ENCODE measurements at regions of chr12 and their contacts with region 1.

Region 1: DNA sequence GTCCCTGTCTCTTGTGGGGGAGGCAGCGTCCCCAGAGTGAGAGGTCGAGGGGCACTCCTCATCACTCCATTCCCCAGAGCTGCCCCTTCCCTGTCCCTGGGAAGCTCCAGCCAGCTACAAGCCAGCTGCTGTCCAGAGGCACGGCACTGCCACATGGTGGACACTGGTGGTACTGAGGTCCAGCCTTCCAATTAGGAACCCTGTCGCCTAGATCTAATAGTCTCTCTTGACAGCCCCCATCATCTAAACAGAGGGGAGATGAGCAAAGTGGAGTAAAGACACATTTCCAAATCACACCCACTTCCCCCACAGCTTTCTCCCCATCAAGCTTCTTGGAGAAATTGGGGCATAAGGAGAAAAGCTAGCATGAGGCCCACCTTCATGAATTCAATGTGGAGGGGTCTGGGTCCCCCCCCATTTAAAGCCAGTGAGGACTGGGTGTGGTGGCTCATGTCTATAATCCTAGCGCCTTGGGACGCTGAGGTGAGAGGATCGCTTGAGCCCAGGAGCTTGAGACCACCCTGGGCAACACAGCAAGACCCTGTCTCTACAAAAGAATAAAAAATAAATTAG is 2.1 kb upstream of the INHBE start:
- DNase-seq: peak; percentile 94
- ATAC-seq: peak; percentile 72
- H3K4me3 Mint-ChIP-seq: no peak overlapping the region
- H3K27ac Mint-ChIP-seq: no peak overlapping the region
- H3K4me1 Mint-ChIP-seq: peaks cover 43% of the 10 kb centered on the region
- H3K27me3 Mint-ChIP-seq: no peaks in the 10 kb centered on the region
- CTCF ChIP-seq: peak; percentile 76

Region 2: DNA sequence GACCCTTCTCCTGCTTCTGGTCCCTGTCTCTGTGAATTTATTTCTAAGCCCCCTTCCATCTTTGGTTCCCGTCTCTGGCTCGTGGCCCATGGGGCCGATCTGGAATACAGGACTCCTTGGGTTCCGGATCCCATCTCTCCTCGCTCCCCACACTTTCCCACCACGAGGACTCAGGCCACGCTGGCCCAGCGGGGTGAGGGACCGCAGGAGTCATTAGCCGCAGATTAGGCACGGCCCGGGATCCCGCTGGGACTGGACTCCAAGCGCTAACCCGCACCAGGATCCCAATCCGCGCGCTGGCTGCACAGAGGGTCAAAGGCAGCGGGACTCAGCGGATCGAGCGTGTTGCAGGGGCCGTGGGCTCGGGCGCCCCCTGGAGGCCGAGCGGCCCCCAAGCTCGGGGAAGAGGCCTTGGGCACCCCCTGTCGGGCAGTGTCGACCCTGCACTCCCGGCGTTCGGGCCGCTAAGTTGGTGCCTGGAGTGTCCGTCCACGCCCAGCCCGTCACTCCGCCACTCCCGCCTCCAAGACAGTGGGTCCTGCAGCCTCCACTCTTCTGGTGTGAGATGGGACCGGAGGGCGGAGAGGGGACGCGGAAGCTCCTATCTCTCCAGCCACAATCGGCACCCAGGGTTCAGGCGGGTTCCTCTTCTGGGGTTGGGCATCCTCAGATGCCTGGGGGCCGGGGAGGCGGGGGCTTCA is 214.0 kb before region 1 on chr12:
- CTCF ChIA-PET with region 1: interaction called, 32 read pairs
- POLR2A ChIA-PET with region 1: interaction called, 3 read pairs
- DNase-seq: peak; percentile 90
- ATAC-seq: peak; percentile 10
- H3K4me3 Mint-ChIP-seq: peak overlapping the region; percentile 84
- H3K27ac Mint-ChIP-seq: no peak overlapping the region; the same call in 1 of the 2 replicates
- H3K4me1 Mint-ChIP-seq: peaks cover 66% of the 10 kb centered on the region
- H3K27me3 Mint-ChIP-seq: peaks cover 89% of the 10 kb centered on the region
- CTCF ChIP-seq: peak; percentile 100

Region 3: DNA sequence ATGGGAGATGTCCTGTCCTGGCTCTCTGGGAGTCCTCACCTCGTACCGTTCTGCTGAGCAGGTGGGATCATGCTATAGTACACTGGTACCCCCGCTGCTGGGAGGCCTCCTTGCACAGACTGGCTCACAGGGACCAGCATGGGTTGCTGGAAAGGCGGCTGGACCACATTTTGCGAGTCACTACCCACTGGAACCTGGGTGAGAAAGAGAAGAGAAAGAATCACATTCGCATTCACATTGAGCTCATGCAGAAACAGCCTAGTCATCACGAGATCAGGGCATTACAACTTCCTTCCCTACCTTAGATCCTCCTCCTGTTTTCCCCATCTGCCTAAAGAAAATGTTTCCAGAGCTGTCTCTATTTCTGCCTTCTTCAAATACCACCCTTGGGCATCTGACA is 184.8 kb before region 1 on chr12:
- CTCF ChIA-PET with region 1: interaction called, 22 read pairs
- POLR2A ChIA-PET with region 1: interaction called, 9 read pairs
- DNase-seq: no peak
- ATAC-seq: no peak
- H3K4me3 Mint-ChIP-seq: no peak overlapping the region
- H3K27ac Mint-ChIP-seq: no peak overlapping the region
- H3K4me1 Mint-ChIP-seq: no peaks in the 10 kb centered on the region
- H3K27me3 Mint-ChIP-seq: no peaks in the 10 kb centered on the region
- CTCF ChIP-seq: no peak

Region 4: DNA sequence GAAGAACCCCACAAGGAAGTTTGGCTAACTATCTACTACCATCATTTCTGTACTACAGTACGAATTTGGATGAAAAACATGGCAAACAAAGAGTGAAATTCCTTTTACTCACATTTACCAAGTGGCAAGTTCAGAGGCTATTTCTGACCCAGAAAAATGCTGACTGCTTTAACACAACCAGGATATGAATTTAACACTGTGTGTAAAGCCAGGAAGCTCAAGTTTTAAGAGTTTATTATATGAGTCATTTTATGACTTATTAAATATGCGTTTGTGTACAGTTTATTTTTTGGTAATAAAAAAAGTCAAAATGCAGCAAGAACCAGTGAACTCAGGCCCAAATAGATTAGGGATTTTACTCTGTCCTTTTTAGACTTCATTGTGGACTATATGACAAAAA is 143.6 kb before region 1 on chr12:
- CTCF ChIA-PET with region 1: interaction called, 245 read pairs
- POLR2A ChIA-PET with region 1: interaction called, 11 read pairs
- DNase-seq: no peak
- ATAC-seq: no peak
- H3K4me3 Mint-ChIP-seq: no peak overlapping the region
- H3K27ac Mint-ChIP-seq: no peak overlapping the region
- H3K4me1 Mint-ChIP-seq: no peaks in the 10 kb centered on the region
- H3K27me3 Mint-ChIP-seq: no peaks in the 10 kb centered on the region
- CTCF ChIP-seq: no peak

Region 5: DNA sequence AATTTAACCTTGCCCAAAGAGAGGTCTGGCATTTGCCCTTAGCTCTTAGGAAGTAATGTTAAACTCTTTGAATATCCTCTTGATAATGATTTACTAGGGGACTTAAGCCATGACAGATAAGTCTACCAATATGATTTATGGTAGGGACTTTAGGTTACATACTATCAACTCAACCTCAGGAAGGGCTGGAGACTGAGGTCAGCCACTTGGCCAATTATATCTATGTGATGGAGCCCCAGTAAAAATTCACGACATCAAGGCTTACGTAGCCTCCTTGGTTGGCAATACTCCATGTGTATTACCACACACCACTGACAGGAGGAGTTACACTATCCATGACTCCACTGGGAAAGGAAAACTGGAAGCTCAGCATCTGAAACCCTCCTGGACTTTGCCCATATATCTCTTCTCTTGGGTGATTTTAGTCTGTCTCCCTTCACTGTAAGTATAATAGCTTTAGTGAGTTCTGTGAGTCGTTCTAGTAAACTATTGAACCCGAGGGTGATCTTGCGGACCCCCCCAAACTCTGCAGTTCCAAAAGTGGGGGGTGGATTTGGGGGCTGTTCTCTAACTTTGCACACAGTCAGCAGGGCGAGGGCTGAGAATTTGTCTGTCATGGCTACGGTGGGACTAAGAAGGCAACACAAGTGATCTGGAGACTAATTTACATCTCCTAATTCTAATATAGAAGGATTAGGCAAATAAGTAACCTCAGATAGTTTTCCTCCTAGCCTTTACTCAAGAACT is 84.5 kb before region 1 on chr12:
- CTCF ChIA-PET with region 1: interaction called, 50 read pairs
- POLR2A ChIA-PET with region 1: interaction called, 4 read pairs
- DNase-seq: no peak
- ATAC-seq: peak; percentile 65
- H3K4me3 Mint-ChIP-seq: no peak overlapping the region
- H3K27ac Mint-ChIP-seq: 0 out of 2 replicates have a peak overlapping the region, but pooled peaks have one; percentile 46
- H3K4me1 Mint-ChIP-seq: no peaks in the 10 kb centered on the region
- H3K27me3 Mint-ChIP-seq: peaks cover 5% of the 10 kb centered on the region
- CTCF ChIP-seq: no peak

Region 6: GRCh38 chr12:57476162-57476992 is 23.4 kb after region 1 on chr12:
- CTCF ChIA-PET with region 1: interaction called, 88 read pairs
- POLR2A ChIA-PET with region 1: interaction called, 6 read pairs
- DNase-seq: peak; percentile 68
- ATAC-seq: peak; percentile 44
- H3K4me3 Mint-ChIP-seq: peak overlapping the region; percentile 77
- H3K27ac Mint-ChIP-seq: no peak overlapping the region
- H3K4me1 Mint-ChIP-seq: peaks cover 35% of the 10 kb centered on the region
- H3K27me3 Mint-ChIP-seq: peaks cover 99% of the 10 kb centered on the region
- CTCF ChIP-seq: peak; percentile 63

Measured in WTC11 (cell line).